ENCODE measurements at regions of chr16 and their contacts with region 1.

Region 1: DNA sequence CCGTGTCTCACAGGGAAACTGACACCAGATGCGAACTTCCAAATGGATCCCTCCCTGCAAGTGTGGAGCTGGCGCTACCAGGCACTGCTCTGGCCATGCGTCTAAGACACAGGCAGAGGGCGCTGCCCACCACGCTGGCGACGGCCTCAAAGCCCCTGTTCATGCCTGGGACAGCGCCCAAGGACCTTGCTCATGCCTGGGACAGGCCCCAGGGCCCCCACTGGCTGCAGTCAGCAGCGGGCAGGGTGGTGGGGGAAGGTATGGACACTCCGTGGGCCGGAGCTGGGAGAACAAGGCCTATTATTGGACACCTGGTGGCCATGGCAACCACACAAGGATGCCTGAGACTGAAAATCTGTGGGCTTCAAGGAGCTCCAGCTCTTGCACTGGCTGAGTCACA is 8.8 kb downstream of the ZG16B start:
- DNase-seq: peak; percentile 71
- ATAC-seq: peak; percentile 81
- H3K4me3 Mint-ChIP-seq: no peak overlapping the region
- H3K27ac Mint-ChIP-seq: no peak overlapping the region
- H3K4me1 Mint-ChIP-seq: peaks cover 34% of the 10 kb centered on the region
- H3K27me3 Mint-ChIP-seq: peaks cover 6% of the 10 kb centered on the region

Region 2: GRCh38 chr16:2821487-2822157 is 17.3 kb before region 1 on chr16:
- CTCF ChIA-PET with region 1: interaction called, 13 read pairs
- POLR2A ChIA-PET with region 1: no interaction called
- DNase-seq: no peak
- ATAC-seq: no peak
- H3K4me3 Mint-ChIP-seq: no peak overlapping the region
- H3K27ac Mint-ChIP-seq: no peak overlapping the region
- H3K4me1 Mint-ChIP-seq: no peaks in the 10 kb centered on the region
- H3K27me3 Mint-ChIP-seq: no peaks in the 10 kb centered on the region

Region 3: GRCh38 chr16:2854700-2855309 is 15.9 kb after region 1 on chr16:
- CTCF ChIA-PET with region 1: interaction called, 16 read pairs
- POLR2A ChIA-PET with region 1: no interaction called
- DNase-seq: no peak
- ATAC-seq: no peak
- H3K4me3 Mint-ChIP-seq: no peak overlapping the region
- H3K27ac Mint-ChIP-seq: no peak overlapping the region
- H3K4me1 Mint-ChIP-seq: peaks cover 9% of the 10 kb centered on the region
- H3K27me3 Mint-ChIP-seq: peaks cover 3% of the 10 kb centered on the region

Region 4: DNA sequence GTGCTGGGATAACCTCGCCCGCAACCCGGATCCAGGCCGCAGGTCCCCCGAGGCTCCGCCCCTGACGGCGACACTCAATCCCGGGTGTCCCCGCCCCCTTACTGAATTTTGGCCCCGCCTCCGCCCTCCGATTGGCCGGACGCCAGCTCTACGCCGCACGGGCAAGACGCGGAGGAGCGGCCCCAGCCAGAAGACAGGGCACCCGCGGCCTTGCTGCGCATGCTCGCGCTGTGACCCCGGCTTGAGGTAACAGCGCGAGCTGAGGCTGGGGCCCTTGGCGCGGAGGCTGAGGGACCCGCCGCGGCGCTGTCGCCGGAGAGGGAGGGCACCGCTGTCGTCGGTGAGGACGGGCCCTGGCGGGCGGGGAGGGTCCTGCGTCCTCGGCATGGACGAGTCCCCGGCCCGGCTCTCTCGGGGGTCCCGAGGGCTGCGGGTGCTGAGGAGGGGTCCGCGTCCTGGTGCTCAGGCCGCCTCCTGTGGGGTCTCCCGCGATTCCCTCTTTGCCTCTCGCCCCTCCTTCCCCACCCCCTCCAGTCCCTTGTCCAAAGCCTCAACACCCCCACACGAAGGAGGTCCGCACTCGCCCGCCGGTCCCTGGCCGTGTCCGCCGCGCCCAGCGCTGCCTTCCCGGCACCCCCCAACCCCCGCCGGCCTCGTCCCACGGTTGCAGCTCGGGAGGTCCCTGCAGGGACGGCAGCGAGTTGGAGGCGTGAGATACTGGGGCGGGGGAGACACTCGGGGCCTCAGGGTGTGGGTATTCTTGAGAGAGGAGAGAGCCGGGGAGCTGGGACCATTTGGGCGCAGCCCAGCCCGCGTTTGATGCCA is 44.3 kb after region 1 on chr16 and contains the start of gene FLYWCH2:
- CTCF ChIA-PET with region 1: interaction called, 12 read pairs
- POLR2A ChIA-PET with region 1: no interaction called
- DNase-seq: peak; percentile 100
- ATAC-seq: peak; percentile 88
- H3K4me3 Mint-ChIP-seq: peak within 1 kb of the TSS; percentile 87
- H3K27ac Mint-ChIP-seq: peak within 1 kb of the TSS; percentile 97
- H3K4me1 Mint-ChIP-seq: peaks cover 14% of the 10 kb centered on the region
- H3K27me3 Mint-ChIP-seq: peaks cover 4% of the 10 kb centered on the region
- total RNA-seq, gene FLYWCH2: 22.5 to 22.8 TPM

Region 5: GRCh38 chr16:2905431-2906387 is 66.8 kb after region 1 on chr16:
- CTCF ChIA-PET with region 1: interaction called, 25 read pairs
- POLR2A ChIA-PET with region 1: no interaction called
- DNase-seq: peak; percentile 98
- ATAC-seq: peak; percentile 79
- H3K4me3 Mint-ChIP-seq: peak overlapping the region; percentile 91
- H3K27ac Mint-ChIP-seq: peak overlapping the region; percentile 90
- H3K4me1 Mint-ChIP-seq: peaks cover 26% of the 10 kb centered on the region
- H3K27me3 Mint-ChIP-seq: peaks cover 5% of the 10 kb centered on the region

Region 6: DNA sequence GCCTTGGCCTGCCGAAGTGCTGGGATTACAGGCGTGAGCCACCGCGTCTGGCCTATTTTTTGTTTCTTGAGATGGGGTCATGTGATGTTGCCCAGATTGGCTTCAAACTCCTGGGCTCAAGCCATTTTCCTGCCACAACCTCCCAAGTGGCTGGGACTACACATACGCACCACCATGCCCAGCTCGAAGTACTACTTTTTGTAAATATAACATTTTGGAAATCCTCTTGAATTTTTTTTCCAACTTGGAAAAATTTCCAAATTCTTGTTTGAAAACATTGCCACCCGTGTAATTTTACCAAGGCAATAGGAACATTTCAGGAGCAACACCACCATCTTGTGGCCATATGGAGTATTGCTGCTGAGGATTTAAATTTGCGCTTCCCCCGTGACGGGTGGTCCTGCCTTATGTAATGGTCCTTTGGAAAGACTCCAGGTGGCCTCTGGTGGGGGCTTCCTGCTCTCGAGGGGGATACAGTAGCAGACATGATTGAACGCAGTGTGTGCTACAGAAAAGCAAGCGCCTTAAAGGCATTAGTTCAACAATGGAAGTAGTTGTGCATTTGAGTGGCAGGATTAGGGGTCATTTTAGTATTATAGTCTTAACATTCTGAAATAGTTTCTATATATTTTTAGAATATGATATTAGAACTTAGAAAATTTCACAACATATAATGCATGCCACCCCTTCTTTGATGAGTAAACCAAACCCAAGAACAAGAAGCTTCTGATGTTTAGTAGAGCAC is 80.8 kb after region 1 on chr16:
- CTCF ChIA-PET with region 1: interaction called, 15 read pairs
- POLR2A ChIA-PET with region 1: no interaction called
- DNase-seq: peak; percentile 76
- ATAC-seq: no peak
- H3K4me3 Mint-ChIP-seq: no peak overlapping the region
- H3K27ac Mint-ChIP-seq: peak overlapping the region; percentile 52
- H3K4me1 Mint-ChIP-seq: peaks cover 11% of the 10 kb centered on the region
- H3K27me3 Mint-ChIP-seq: no peaks in the 10 kb centered on the region

Region 7: GRCh38 chr16:2926650-2927646 is 88.0 kb after region 1 on chr16:
- CTCF ChIA-PET with region 1: interaction called, 17 read pairs
- POLR2A ChIA-PET with region 1: no interaction called
- DNase-seq: peak; percentile 93
- ATAC-seq: peak; percentile 99
- H3K4me3 Mint-ChIP-seq: no peak overlapping the region
- H3K27ac Mint-ChIP-seq: peak overlapping the region; percentile 2
- H3K4me1 Mint-ChIP-seq: peaks cover 14% of the 10 kb centered on the region
- H3K27me3 Mint-ChIP-seq: no peaks in the 10 kb centered on the region

Measured in activated CD8-positive, alpha-beta T cell treated with anti-CD3 and anti-CD28 coated beads, Interleukin-2, amount 10 ng/mL, durations not matched to agents 7 days and 5 days (primary cell).